CD8-positive, alpha-beta memory T cell (primary cell): ENCODE measurements at regions of chr1 and their contacts with region 1.

Region 1: DNA sequence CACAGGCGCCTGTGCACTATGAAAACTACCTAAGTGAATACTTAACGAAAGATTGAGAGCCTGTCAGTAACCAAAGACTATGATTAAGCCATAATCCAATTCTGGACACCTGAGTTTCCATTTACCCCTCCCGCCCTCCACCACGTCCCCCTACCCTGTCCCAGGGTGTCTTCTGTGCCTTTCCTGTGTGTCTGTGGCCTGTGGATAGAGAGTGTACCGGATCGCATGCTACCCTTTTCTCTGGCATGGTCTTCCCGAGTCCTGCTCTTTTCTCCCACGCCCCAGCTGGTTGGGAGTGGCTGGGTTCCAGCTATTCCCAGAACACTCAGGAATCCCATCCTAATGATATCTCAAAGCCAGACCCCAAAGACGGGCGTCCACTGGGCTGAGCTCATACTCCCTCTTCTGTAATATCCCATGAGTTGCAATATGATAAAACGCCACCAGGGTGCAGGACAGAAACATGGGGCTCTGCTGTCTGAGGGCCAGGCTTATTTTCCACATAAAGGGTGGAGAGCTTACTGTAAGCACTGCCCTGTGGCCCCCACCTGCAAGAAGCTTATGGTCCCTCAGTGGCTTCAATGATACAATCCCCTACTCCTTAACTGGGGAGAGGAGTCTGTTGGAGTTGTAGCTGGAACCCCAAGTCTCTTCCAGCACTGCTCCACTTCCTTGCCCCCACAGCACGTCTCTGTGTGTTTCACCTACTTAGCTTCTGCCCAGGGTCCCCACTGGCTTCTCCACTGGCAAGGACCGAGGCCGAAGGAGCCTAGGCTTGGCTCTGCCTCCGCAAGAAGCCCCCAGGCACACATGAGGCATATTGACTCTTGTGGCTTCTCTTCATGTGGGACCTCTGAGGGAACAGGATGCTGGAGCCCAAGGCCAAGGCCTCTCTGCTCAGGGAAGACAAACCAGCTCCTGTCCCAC is 17.6 kb upstream of the ALX3 start:
- DNase-seq: peak in 3 of 5 donors; percentile 17 to 54 (median 32)
- H3K4me3 ChIP-seq: no peak overlapping the region
- H3K4me3 Mint-ChIP-seq: no peak overlapping the region
- H3K27ac ChIP-seq: no peak overlapping the region
- H3K27ac Mint-ChIP-seq: no peak overlapping the region
- H3K4me1 ChIP-seq: peaks cover 6% of the 10 kb centered on the region
- H3K4me1 Mint-ChIP-seq: peaks cover 9 to 17% (median 14%) of the 10 kb centered on the region in 3 donors
- H3K27me3 ChIP-seq: peaks cover 23% of the 10 kb centered on the region
- H3K27me3 Mint-ChIP-seq: peaks cover 42 to 63% of the 10 kb centered on the region in 2 donors

Region 2: DNA sequence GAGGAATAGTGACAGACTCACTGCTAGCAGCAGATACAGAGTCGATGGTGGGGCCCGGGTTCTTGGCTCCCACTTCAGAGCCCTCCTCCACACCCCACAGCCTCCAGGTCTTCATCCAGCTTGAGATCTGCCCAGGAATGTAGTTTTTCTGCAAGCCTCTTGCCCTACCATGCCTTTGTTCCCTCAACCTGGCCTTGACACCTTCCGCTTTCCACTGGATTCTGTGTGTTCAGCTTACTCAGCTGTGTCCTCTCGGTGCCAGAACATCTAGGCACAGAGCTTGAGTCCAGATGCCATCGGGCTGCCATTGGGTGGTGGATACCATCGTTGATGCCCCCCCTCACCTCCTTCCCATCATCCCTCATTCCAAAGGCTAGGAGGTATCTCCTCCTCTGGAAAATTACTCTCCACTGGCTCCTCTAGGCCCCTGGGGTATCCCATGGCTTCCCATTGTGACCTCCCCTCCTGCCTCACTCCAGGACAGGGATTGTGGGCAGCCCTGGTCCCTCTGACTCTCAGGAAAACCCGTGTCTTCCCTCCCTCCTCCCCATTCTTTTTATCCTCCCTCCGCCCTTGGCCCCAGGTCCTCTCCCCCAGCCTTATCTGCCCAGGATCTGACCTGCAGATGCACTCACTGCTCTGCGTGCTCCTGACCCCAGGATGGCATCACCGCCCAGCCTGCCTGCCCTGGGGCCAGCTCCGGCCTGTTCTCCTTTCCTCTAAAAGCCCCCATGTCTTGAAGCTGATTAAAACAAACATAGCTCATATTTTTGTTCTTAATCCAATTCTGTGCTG is 10.0 kb after region 1 on chr1:
- CTCF ChIA-PET with region 1: interaction called, 12 read pairs
- POLR2A ChIA-PET with region 1: no interaction called
- DNase-seq: no peak
- H3K4me3 ChIP-seq: no peak overlapping the region
- H3K4me3 Mint-ChIP-seq: no peak overlapping the region
- H3K27ac ChIP-seq: no peak overlapping the region
- H3K27ac Mint-ChIP-seq: no peak overlapping the region
- H3K4me1 ChIP-seq: no peaks in the 10 kb centered on the region
- H3K4me1 Mint-ChIP-seq: no peaks in the 10 kb centered on the region
- H3K27me3 ChIP-seq: no peaks in the 10 kb centered on the region
- H3K27me3 Mint-ChIP-seq: peaks cover 11 to 35% of the 10 kb centered on the region in 2 donors

Region 3: GRCh38 chr1:110170766-110171733 is 83.0 kb after region 1 on chr1:
- CTCF ChIA-PET with region 1: no interaction called
- POLR2A ChIA-PET with region 1: no interaction called
- DNase-seq: no peak
- H3K4me3 ChIP-seq: no peak overlapping the region
- H3K4me3 Mint-ChIP-seq: no peak overlapping the region
- H3K27ac ChIP-seq: no peak overlapping the region
- H3K27ac Mint-ChIP-seq: no peak overlapping the region
- H3K4me1 ChIP-seq: no peaks in the 10 kb centered on the region
- H3K4me1 Mint-ChIP-seq: no peaks in the 10 kb centered on the region
- H3K27me3 ChIP-seq: no peaks in the 10 kb centered on the region
- H3K27me3 Mint-ChIP-seq: peaks cover 11 to 25% of the 10 kb centered on the region in 2 donors